Motor neuron (in vitro differentiated cells): ENCODE measurements at regions of chr19 and their contacts with region 1.

Region 1: GRCh38 chr19:42529248-42529764 is 1.0 kb upstream of the CEACAM1 start:
- ATAC-seq: peak in 6 of 8 experiments; percentile 32 to 95 (median 66)
- H3K4me3 ChIP-seq: no peak overlapping the region
- H3K27ac ChIP-seq: no peak overlapping the region
- H3K4me1 ChIP-seq: no peaks in the 10 kb centered on the region

Region 2: GRCh38 chr19:42427313-42427712 is 102.0 kb before region 1 on chr19 and contains the start of gene LIPE:
- in situ Hi-C with region 1: no loop called
- ATAC-seq: no peak
- H3K4me3 ChIP-seq: no peak within 1 kb of the TSS
- H3K27ac ChIP-seq: no peak within 1 kb of the TSS
- H3K4me1 ChIP-seq: peaks cover 8 to 9% of the 10 kb centered on the region in 2 donors
- total RNA-seq, gene LIPE: 4.2 to 13.5 (median 7.2) TPM

Region 3: GRCh38 chr19:42440357-42441048 is 88.8 kb before region 1 on chr19:
- in situ Hi-C with region 1: loop called in 1 of 9 experiments (anchors 10 kb)
- ATAC-seq: peak in 3 of 8 experiments; percentile 79 to 85 (median 84)
- H3K4me3 ChIP-seq: no peak overlapping the region
- H3K27ac ChIP-seq: no peak overlapping the region
- H3K4me1 ChIP-seq: no peaks in the 10 kb centered on the region

Region 4: DNA sequence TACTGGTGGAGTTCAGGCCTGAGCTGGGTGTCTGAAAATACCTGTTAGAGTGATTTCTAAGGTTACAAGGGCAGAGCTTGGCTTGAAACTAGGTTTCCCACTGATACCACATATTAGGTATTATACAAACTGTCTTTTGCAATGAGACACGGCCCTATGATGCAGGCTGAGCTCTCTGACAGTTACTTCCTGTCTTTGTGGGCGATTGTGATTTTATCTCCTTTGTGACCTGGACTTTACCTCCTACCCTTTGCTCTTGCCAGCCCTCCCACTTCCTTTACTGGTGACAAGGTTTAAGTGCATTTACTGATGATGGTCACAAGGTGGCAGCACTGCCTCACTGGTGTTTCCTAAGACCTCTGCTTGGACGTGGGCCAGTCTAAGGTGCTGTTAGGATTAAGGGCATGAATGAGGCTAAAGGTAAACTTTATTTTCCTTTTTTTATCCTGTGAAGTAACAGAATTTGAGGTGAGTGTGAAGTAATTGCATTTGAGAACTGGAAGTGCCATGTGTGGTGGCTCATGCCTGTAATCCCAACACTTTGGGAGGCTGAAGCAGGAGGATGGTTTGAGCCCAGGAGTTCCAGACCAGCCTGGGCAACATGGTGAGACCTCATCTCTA is 78.9 kb before region 1 on chr19:
- in situ Hi-C with region 1: loop called in 3 of 9 experiments (anchors 10 kb)
- ATAC-seq: peak; percentile 57 to 87 (median 72)
- H3K4me3 ChIP-seq: no peak overlapping the region
- H3K27ac ChIP-seq: no peak overlapping the region
- H3K4me1 ChIP-seq: no peaks in the 10 kb centered on the region